IMR-90 (cell line): ENCODE measurements at regions of chr1 and their contacts with region 1.

Region 1: DNA sequence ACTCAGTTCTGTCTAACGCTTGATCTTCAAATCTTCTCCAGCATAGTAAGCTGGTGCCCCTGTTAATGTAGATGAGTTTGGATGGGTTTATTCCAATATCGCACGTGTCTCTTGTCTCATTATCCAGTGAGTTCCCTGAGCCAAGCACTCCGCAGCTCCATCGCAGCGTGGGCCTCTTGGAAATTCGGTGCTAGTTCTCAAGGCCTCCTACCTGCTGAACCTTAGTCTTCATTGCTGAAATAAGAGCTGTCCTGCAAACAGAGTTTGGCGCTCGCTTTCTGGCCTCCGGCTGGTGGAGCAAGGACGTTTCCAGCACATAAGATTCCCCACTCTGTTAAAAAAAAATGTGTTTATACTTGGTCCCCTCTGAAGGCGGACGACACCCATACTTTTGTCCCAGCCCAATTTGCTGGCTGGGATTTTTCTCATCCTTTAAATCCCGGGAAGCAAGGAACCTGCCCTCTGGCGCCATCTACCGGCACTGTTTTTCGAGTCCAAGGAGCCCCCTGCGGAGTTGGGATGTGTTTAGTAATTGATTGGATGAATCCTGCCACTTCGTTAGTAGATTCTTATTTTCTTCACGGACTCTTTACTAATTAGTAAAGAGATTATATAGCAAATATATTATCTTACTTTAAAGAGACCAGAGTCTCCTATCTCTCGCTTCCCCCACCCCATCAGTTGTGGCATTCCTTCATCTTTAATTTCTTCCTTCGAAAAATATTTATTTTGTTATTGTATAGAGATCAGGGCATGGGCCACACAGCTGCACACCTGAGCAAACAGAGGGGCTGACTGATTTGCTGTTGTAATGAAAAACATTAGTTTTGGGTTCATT is 14.7 kb downstream of the JUN start:
- DNase-seq: peak; percentile 63
- ATAC-seq: peak; percentile 43
- H3K4me3 ChIP-seq: no peak overlapping the region
- H3K27ac ChIP-seq: no peak overlapping the region
- H3K4me1 ChIP-seq: peaks cover 13% of the 10 kb centered on the region
- H3K27me3 ChIP-seq: no peaks in the 10 kb centered on the region
- CTCF ChIP-seq: peak; percentile 84
- POLR2A ChIP-seq: no peak
- RAD21 ChIP-seq: peak; percentile 91

Region 2: GRCh38 chr1:58515794-58516401 is 253.3 kb before region 1 on chr1:
- CTCF ChIA-PET with region 1: interaction called, 4 read pairs
- POLR2A ChIA-PET with region 1: no interaction called
- dilution Hi-C with region 1: no loop called
- in situ Hi-C with region 1: no loop called
- intact Hi-C with region 1: loop called (anchors 5 kb)
- DNase-seq: peak; percentile 85
- ATAC-seq: peak; percentile 79
- H3K4me3 ChIP-seq: no peak overlapping the region
- H3K27ac ChIP-seq: no peak overlapping the region
- H3K4me1 ChIP-seq: no peaks in the 10 kb centered on the region
- H3K27me3 ChIP-seq: no peaks in the 10 kb centered on the region
- CTCF ChIP-seq: peak; percentile 85
- POLR2A ChIP-seq: no peak
- RAD21 ChIP-seq: peak; percentile 86

Region 3: GRCh38 chr1:58652651-58653184 is 116.5 kb before region 1 on chr1:
- CTCF ChIA-PET with region 1: interaction called, 3 read pairs
- POLR2A ChIA-PET with region 1: no interaction called
- dilution Hi-C with region 1: no loop called
- in situ Hi-C with region 1: no loop called
- intact Hi-C with region 1: loop called (anchors 1 kb)
- DNase-seq: peak; percentile 84
- ATAC-seq: peak; percentile 94
- H3K4me3 ChIP-seq: no peak overlapping the region
- H3K27ac ChIP-seq: no peak overlapping the region
- H3K4me1 ChIP-seq: no peaks in the 10 kb centered on the region
- H3K27me3 ChIP-seq: no peaks in the 10 kb centered on the region
- CTCF ChIP-seq: peak; percentile 92
- POLR2A ChIP-seq: no peak
- RAD21 ChIP-seq: peak; percentile 94

Region 4: GRCh38 chr1:58699011-58699762 is 70.0 kb before region 1 on chr1:
- CTCF ChIA-PET with region 1: no interaction called
- POLR2A ChIA-PET with region 1: no interaction called
- dilution Hi-C with region 1: no loop called
- in situ Hi-C with region 1: no loop called
- intact Hi-C with region 1: loop called (anchors 10 kb)
- DNase-seq: no peak
- ATAC-seq: peak; percentile 37
- H3K4me3 ChIP-seq: peak overlapping the region; percentile 80
- H3K27ac ChIP-seq: peak overlapping the region; percentile 84
- H3K4me1 ChIP-seq: no peaks in the 10 kb centered on the region
- H3K27me3 ChIP-seq: no peaks in the 10 kb centered on the region
- CTCF ChIP-seq: no peak
- POLR2A ChIP-seq: no peak
- RAD21 ChIP-seq: no peak

Region 5: DNA sequence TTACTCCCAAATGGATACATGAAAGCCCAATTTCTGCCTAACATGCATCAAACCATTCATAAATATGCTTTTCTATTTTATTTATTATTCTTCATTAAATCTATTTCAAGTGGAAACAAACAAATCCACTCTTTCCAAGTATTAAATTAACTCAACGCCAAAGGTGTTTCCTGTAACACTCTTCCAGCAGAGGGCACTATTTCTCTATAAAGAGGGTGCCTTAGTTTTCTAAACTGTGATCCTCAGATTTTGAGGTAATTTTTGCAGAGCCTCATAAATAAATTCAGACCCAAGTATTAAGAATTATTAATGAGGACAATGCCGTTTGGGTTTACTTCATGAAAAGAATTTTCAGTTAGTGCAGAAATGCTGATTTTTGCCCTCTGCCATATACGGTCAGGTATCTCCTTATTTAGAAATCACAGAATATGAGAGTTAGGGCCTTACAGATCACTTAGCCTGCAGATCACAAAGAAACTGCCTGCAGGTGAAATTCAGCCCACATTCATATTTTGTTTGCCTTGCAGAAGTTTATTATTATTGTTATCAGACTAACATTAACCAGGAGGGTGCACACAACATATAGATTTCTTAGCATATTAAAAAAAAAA is 29.2 kb before region 1 on chr1:
- CTCF ChIA-PET with region 1: interaction called, 4 read pairs
- POLR2A ChIA-PET with region 1: no interaction called
- dilution Hi-C with region 1: no loop called
- in situ Hi-C with region 1: no loop called
- intact Hi-C with region 1: loop called (anchors 1 kb)
- DNase-seq: peak; percentile 71
- ATAC-seq: peak; percentile 64; the same call in 1 of the 2 replicates
- H3K4me3 ChIP-seq: no peak overlapping the region
- H3K27ac ChIP-seq: no peak overlapping the region
- H3K4me1 ChIP-seq: no peaks in the 10 kb centered on the region
- H3K27me3 ChIP-seq: no peaks in the 10 kb centered on the region
- CTCF ChIP-seq: peak; percentile 93
- POLR2A ChIP-seq: no peak
- RAD21 ChIP-seq: peak; percentile 94

Region 6: GRCh38 chr1:58964880-58965279 is 195.7 kb after region 1 on chr1:
- CTCF ChIA-PET with region 1: no interaction called
- POLR2A ChIA-PET with region 1: no interaction called
- dilution Hi-C with region 1: no loop called
- in situ Hi-C with region 1: no loop called
- intact Hi-C with region 1: no loop called
- DNase-seq: peak; percentile 40
- ATAC-seq: peak; percentile 49
- H3K4me3 ChIP-seq: no peak overlapping the region
- H3K27ac ChIP-seq: no peak overlapping the region
- H3K4me1 ChIP-seq: peaks cover 4% of the 10 kb centered on the region; the same call in 1 of the 2 replicates
- H3K27me3 ChIP-seq: no peaks in the 10 kb centered on the region
- CTCF ChIP-seq: no peak
- POLR2A ChIP-seq: no peak
- RAD21 ChIP-seq: no peak